Aorta (tissue), 5 donors: ENCODE measurements at regions of chr5 and their contacts with region 1.

Region 1: DNA sequence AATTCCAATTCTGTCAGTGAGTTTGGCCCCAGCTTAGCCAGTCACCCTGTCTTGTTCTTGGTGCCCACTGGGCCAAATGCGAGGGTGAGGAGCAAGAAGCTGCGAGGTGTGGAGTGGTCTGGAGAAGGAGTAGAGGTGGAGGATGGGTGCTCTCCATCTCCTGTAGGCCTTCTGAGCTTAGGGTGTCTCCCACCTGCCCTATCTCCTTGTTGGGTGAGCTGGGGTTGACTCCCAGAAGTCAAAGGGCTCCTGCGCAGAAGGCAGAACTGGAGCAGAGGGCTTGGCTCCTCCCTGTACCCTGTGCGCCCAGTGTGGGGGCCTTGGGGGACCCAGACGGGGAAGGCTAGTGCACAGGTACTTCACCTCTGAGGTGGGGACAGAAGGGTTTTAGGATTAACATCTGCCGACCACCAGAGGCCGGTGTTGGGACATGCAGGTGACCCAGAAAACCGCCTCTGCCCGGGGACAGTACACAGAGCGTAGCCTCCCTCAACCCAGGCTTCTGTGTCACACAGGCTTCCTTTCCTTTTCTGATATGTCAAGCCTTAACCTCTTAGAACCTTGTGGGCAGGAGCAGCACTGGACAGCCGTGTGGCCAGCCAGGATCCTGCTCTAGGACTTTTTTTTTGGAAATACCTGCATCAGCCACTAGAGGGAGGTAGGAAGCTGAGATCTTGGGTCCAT is 16.9 kb downstream of the IL5 start:
- DNase-seq: no peak
- ATAC-seq: peak; percentile 80
- H3K4me3 ChIP-seq: no peak overlapping the region
- H3K27ac ChIP-seq: no peak overlapping the region
- H3K4me1 ChIP-seq: no peaks in the 10 kb centered on the region
- H3K27me3 ChIP-seq: no peaks in the 10 kb centered on the region

Region 2: DNA sequence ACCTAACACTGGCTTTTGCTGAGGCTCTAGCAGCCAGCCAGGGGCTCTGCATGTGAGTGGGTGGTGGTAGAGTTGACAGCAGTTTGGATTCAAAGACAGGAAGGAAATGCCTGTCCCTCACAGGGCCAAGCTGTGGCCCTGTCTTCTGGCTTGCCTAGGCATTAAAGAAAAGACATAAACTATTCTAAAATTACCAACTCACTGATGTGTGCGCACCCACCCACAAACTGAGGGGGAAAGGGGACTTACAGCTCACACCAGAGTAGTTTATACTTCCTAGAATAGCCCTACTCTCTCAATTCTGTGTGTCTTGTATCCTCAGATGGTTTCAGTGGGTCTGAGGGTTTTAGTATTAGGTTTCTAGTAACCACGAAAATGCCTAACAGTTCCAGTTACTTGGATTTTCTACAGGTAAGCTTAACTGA is 113.3 kb after region 1 on chr5:
- intact Hi-C with region 1: no loop called
- DNase-seq: no peak
- ATAC-seq: no peak
- H3K4me3 ChIP-seq: no peak overlapping the region
- H3K27ac ChIP-seq: no peak overlapping the region
- H3K4me1 ChIP-seq: no peaks in the 10 kb centered on the region
- H3K27me3 ChIP-seq: no peaks in the 10 kb centered on the region

Region 3: GRCh38 chr5:132704875-132705274 is 178.4 kb after region 1 on chr5:
- intact Hi-C with region 1: loop called (anchors 10 kb)
- DNase-seq: no peak
- ATAC-seq: no peak
- H3K4me3 ChIP-seq: no peak overlapping the region
- H3K27ac ChIP-seq: no peak overlapping the region
- H3K4me1 ChIP-seq: no peaks in the 10 kb centered on the region
- H3K27me3 ChIP-seq: no peaks in the 10 kb centered on the region

Region 4: DNA sequence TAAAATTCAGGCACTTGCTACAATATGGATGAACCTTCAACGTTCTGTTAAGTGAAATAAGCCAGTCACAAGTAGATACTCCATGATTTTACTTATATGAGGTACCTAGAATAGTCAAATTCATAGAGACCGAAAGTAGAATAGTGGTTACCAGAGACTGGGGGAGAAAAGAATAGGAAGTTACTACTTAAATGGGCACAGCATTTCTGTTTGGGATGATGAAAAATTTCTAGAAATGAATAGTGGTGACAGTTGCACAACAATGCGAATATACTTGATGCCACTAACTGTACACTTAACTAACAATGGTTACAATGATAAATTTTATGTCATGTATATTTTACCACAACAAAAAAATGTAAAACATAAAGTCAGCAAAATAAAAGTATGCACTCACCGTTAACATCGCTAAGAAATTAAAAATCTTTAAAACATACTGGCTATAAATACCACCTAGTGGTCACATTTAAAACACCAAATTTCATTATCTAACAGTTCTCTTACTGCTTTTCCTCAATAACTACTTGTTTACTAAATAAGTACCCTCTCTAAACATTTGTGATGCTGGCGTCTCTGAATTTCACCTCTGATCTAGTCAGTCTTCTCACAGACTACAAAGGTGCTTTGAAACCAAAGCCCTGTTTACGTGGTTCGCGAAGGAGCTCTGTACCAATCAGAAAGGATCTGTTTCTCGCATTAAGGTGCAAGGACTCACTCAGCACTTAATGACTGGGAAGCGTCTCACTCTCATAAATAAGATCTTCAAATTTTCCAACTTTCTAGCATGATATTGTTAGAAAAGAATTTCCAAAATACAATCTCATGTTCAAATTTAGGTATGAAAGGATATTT is 188.2 kb after region 1 on chr5:
- intact Hi-C with region 1: loop called (anchors 10 kb)
- DNase-seq: no peak
- ATAC-seq: no peak
- H3K4me3 ChIP-seq: no peak overlapping the region
- H3K27ac ChIP-seq: no peak overlapping the region
- H3K4me1 ChIP-seq: no peaks in the 10 kb centered on the region
- H3K27me3 ChIP-seq: no peaks in the 10 kb centered on the region